ENCODE measurements at regions of chr7 and their contacts with region 1.

Region 1: DNA sequence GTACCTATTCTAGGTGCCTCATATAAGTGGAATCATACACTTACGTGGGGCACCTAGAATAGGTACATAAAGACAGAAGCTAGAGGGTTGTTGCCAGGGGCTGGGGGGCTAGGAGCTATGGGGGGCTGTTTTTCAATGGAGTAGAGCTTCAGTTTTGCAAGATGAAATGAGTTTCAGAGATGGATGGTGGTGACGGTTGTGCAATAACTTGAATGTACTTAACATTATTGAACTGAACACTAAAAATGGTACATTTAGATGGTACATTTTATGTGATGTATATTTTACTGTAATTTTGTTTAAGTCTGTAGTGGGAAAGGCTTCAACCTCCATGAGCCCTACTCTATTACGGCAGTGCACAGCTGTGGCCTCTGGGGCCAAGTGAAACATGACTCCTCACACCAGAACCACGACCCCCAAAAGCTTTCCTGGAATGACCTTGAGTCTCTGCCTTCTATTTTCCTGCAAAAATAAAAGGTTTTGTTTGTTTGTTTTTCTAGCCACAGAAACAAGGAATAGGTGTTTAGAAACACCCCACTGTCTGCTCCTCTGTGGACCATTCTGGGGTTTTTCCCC is 147.3 kb upstream of the PLXNA4 start:
- DNase-seq: no peak
- H3K4me3 ChIP-seq: no peak overlapping the region
- H3K27me3 ChIP-seq: peaks cover 2% of the 10 kb centered on the region; the same call in 1 of the 2 replicates
- CTCF ChIP-seq: no peak

Region 2: GRCh38 chr7:132709971-132710567 is 13.5 kb before region 1 on chr7:
- CTCF ChIA-PET with region 1: interaction called, 13 read pairs
- POLR2A ChIA-PET with region 1: no interaction called
- DNase-seq: no peak
- H3K4me3 ChIP-seq: no peak overlapping the region
- H3K27me3 ChIP-seq: no peaks in the 10 kb centered on the region; the same call in 1 of the 2 replicates
- CTCF ChIP-seq: peak; percentile 62